HEK293 (cell line): ENCODE measurements at regions of chr4 and their contacts with region 1.

Region 1: DNA sequence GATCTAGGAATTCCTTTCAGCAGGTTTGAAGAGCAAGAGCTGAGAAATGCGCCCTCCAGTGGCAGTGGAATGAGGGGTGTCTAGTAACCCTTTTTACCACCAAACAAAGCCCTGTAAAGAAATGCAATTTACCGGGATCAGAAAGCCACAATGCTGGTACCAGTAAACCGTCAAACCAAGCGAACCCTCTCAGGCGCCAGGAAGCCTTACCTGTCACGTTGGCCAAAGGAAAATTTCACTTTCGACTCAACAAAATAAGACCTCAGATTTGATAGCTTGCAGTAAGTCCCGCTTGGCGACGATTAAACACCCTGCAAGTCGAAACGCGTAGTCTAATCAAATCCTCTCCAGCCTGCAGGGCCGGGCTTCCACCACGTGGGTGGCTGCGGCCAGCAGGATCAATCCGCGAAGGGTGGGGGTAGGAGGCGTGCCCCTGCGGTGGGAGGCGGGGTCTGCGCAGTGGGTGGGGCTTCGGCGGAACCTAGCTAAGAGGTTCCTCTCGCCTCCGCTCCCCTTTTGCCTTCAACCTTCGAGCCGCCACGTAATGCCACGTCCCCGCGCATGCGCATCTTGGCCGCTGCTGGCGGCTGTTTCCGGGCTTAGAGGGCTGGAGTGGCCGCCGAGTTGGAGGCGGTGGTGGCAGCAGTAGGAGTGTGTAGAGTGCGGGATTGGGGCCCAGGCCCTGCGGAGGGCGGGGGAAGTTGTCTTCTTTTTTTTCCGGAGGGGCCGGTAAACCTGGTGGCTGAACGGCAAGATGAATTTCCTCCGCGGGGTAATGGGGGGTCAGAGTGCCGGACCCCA is at the start of gene USO1:
- H3K4me3 ChIP-seq: peak within 1 kb of the TSS; percentile 95
- H3K27ac ChIP-seq: peak within 1 kb of the TSS; percentile 57
- H3K4me1 ChIP-seq: no peaks in the 10 kb centered on the region
- CTCF ChIP-seq: peak; percentile 77

Region 2: GRCh38 chr4:75344915-75345314 is 379.4 kb before region 1 on chr4:
- CTCF ChIA-PET with region 1: no interaction called
- POLR2A ChIA-PET with region 1: no interaction called
- H3K4me3 ChIP-seq: no peak overlapping the region
- H3K27ac ChIP-seq: no peak overlapping the region
- H3K4me1 ChIP-seq: peaks cover 3% of the 10 kb centered on the region; the same call in 1 of the 2 replicates
- CTCF ChIP-seq: no peak

Region 3: DNA sequence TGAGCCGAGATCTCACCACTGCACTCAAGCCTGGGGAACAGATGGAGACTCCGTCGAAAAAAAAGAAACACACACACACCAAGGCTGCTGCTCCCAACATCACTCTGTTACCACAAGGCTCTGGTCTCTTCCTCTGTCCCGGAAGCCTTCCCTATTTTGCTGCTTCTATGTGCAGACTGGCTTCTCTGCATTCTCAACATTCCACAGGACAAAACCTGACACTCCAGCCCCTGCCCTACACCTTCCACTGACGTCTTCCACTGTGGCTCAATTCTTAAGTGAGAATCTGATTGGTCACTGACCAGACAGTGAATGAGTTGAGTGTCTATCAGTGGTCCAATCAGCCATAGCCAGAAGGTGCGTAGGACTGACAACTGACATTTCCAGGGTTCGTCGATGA is 162.5 kb before region 1 on chr4:
- CTCF ChIA-PET with region 1: no interaction called
- POLR2A ChIA-PET with region 1: interaction called, 10 read pairs
- H3K4me3 ChIP-seq: no peak overlapping the region
- H3K27ac ChIP-seq: no peak overlapping the region
- H3K4me1 ChIP-seq: no peaks in the 10 kb centered on the region
- CTCF ChIP-seq: no peak

Region 4: DNA sequence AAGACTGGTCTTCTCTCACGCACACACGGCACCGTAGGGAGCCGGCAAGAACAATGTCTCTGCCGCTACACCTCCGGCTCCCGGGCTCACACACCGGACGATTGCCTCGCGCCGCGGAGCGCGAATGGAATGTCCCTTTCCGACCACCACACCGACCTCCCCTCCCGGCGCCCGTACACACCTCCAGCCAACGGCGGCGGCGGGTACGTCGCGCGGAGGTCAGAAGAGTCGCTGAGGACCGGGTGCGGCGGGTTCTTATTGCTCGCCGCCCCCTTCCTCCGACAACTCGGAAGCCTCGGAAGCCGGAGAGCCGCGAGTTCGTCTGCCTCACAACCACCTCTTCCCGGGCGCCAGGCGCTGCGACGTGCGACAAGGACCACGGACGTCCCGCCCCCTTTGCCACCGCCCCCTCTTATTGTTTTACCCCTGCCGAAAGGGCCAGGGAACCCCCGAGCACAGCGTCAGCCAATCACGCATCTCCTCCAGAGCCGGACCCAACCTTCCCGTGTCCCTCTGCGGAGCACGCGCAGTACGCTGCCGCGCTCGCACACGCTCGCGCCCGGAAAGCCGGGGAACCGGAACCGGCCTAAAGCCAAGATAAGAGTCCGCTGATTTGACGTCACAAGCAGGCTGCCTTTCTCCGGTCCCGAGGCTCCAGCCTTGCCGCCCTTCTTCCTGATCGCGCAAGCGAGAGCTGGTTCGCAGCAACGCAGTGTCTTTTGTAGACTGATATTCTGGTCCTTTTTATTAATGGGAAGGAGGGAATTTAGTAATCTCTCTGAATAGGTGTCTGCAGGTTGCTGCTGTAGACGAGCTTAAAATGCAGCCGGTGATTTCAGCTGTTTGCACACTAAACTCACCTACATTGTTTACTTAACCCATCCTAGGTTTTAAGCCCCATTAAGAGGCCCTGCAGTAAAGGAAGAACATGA is 51.0 kb before region 1 on chr4 and contains the start of gene G3BP2:
- CTCF ChIA-PET with region 1: interaction called, 9 read pairs
- POLR2A ChIA-PET with region 1: interaction called, 44 read pairs
- H3K4me3 ChIP-seq: peak within 1 kb of the TSS; percentile 95
- H3K27ac ChIP-seq: peak within 1 kb of the TSS; percentile 94
- H3K4me1 ChIP-seq: peaks cover 10% of the 10 kb centered on the region
- CTCF ChIP-seq: no peak

Region 5: GRCh38 chr4:75908555-75908954 is 184.3 kb after region 1 on chr4:
- CTCF ChIA-PET with region 1: no interaction called
- POLR2A ChIA-PET with region 1: no interaction called
- H3K4me3 ChIP-seq: no peak overlapping the region
- H3K27ac ChIP-seq: no peak overlapping the region
- H3K4me1 ChIP-seq: no peaks in the 10 kb centered on the region
- CTCF ChIP-seq: no peak